B cell (primary cell): ENCODE measurements at regions of chr2 and their contacts with region 1.

Region 1: DNA sequence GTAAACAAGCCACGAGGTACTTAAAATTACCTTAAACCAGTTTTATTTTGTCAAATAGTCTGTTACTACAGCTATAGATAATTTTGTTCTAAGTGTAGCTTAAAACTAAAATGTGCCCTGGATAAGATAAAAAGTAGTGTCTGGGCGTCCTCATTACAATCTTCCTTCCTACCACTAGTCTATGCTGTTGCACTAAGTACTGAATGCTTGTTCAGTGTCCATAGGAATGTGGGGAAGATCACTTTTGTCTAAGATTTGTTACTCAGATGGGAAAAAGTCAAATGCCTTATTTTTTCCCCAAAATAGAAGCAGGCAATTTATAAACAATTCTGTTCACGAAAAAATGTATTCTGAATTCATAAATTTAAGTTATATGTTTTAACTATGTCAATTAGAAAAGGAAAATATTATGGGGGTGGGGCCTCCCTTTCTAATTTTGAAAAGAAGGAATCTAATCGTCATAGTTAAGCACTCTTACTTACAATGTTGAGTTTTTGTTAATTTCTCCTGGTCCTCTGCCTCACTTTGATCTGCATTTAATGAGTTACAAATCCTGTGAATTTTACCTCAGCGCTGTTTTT is 140.4 kb upstream of the VRK2 start:
- DNase-seq: peak; percentile 64
- ATAC-seq: peak; percentile 65
- H3K4me3 ChIP-seq: no peak overlapping the region
- H3K4me3 Mint-ChIP-seq: no peak overlapping the region
- H3K27ac ChIP-seq: no peak overlapping the region
- H3K27ac Mint-ChIP-seq: peak overlapping the region; percentile 1
- H3K4me1 ChIP-seq: peaks cover 14 to 32% of the 10 kb centered on the region in 2 donors
- H3K4me1 Mint-ChIP-seq: peaks cover 34% of the 10 kb centered on the region
- H3K27me3 ChIP-seq: no peaks in the 10 kb centered on the region
- H3K27me3 Mint-ChIP-seq: no peaks in the 10 kb centered on the region
- CTCF ChIP-seq: peak; percentile 84

Region 2: DNA sequence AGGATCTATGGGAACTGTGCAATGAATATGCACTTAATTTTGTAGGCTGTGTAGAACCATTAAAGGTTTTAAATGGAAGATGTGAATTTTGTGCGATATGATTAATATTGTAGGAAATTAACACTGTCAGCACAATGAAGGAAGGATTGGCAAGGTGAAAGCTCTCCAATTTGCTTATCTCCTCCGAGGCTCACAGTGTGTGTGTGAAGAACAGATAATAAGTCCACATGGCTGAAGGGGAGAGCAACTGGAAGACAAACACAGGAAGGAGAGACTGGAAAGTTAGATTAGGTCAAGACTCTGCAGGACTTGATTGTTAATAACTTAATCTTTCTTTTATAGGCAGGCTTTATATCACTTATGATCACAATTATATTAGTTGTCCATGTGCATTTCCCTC is 129.3 kb before region 1 on chr2:
- CTCF ChIA-PET with region 1: no interaction called
- POLR2A ChIA-PET with region 1: no interaction called
- intact Hi-C with region 1: no loop called
- DNase-seq: no peak
- ATAC-seq: no peak
- H3K4me3 ChIP-seq: no peak overlapping the region
- H3K4me3 Mint-ChIP-seq: no peak overlapping the region
- H3K27ac ChIP-seq: no peak overlapping the region
- H3K27ac Mint-ChIP-seq: no peak overlapping the region
- H3K4me1 ChIP-seq: no peaks in the 10 kb centered on the region
- H3K4me1 Mint-ChIP-seq: no peaks in the 10 kb centered on the region
- H3K27me3 ChIP-seq: no peaks in the 10 kb centered on the region
- H3K27me3 Mint-ChIP-seq: no peaks in the 10 kb centered on the region
- CTCF ChIP-seq: no peak

Region 3: GRCh38 chr2:58046585-58047372 is 140.5 kb after region 1 on chr2 and contains the start of gene VRK2:
- CTCF ChIA-PET with region 1: interaction called, 4 read pairs
- POLR2A ChIA-PET with region 1: interaction called, 3 read pairs
- intact Hi-C with region 1: loop called (anchors 2 kb)
- DNase-seq: peak; percentile 94
- ATAC-seq: peak; percentile 91
- H3K4me3 ChIP-seq: peak within 1 kb of the TSS; percentile 71 to 92 (median 77)
- H3K4me3 Mint-ChIP-seq: peak within 1 kb of the TSS; percentile 96
- H3K27ac ChIP-seq: peak within 1 kb of the TSS; percentile 91 to 95
- H3K27ac Mint-ChIP-seq: peak within 1 kb of the TSS; percentile 99
- H3K4me1 ChIP-seq: peaks cover 27 to 29% of the 10 kb centered on the region in 2 donors
- H3K4me1 Mint-ChIP-seq: peaks cover 48% of the 10 kb centered on the region
- H3K27me3 ChIP-seq: no peaks in the 10 kb centered on the region
- H3K27me3 Mint-ChIP-seq: no peaks in the 10 kb centered on the region
- CTCF ChIP-seq: peak; percentile 24
- total RNA-seq, gene VRK2: 33.4 and 35.5 TPM in 2 replicates

Region 4: GRCh38 chr2:58163913-58164312 is 257.7 kb after region 1 on chr2:
- CTCF ChIA-PET with region 1: no interaction called
- POLR2A ChIA-PET with region 1: no interaction called
- intact Hi-C with region 1: loop called (anchors 5 kb)
- DNase-seq: no peak
- ATAC-seq: no peak
- H3K4me3 ChIP-seq: no peak overlapping the region
- H3K4me3 Mint-ChIP-seq: no peak overlapping the region
- H3K27ac ChIP-seq: no peak overlapping the region
- H3K27ac Mint-ChIP-seq: no peak overlapping the region
- H3K4me1 ChIP-seq: no peaks in the 10 kb centered on the region
- H3K4me1 Mint-ChIP-seq: no peaks in the 10 kb centered on the region
- H3K27me3 ChIP-seq: no peaks in the 10 kb centered on the region
- H3K27me3 Mint-ChIP-seq: no peaks in the 10 kb centered on the region
- CTCF ChIP-seq: no peak

Region 5: DNA sequence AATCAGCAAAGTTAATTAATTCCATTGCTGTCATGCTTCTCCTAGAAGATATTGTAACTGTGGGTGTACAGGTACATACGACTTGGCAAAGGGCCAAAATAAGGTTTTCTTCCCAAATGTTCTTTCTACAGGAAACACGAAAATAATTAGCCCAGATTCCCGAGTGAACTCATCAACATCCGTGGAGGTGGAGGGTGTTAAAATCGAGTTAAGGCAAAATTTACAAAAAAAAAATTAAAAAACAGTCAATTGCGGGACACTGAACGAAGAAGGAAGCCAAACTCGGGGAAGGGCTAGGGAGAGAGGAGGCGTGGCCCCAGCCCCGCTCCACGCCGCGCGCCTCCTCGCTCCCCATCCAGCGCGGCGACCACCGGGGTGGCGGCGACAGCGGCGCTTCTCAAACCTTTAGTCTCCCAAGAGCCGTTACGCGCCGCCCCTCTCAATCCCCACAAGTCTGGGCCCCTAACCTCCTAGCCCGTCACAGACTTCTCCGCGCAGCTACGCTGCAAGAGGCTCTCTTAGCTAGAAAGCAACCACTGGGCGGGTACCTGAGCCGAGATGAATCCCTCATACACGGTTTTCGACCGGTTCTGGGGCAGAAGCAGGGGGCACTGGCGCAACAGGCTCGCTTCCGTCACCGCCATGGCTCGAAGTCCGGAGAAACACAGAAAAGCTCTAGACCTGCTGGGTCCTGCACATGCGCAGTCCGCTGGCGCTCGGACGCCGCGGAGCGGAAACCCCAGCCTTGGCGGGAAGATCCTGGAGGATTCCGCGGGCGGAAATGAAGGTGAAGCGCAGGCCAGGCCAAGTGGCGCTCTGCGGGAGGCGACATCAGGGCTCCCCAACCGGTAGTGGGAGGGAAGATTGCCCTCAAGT is 334.7 kb after region 1 on chr2 and contains the start of gene FANCL:
- CTCF ChIA-PET with region 1: interaction called, 7 read pairs
- POLR2A ChIA-PET with region 1: no interaction called
- intact Hi-C with region 1: loop called (anchors 2 kb)
- DNase-seq: peak; percentile 85
- ATAC-seq: peak; percentile 82
- H3K4me3 ChIP-seq: peak within 1 kb of the TSS; percentile 86 to 97 (median 87)
- H3K4me3 Mint-ChIP-seq: peak within 1 kb of the TSS; percentile 96
- H3K27ac ChIP-seq: peak within 1 kb of the TSS; percentile 70 to 74
- H3K27ac Mint-ChIP-seq: peak within 1 kb of the TSS; percentile 90
- H3K4me1 ChIP-seq: peaks cover 12 to 15% of the 10 kb centered on the region in 2 donors
- H3K4me1 Mint-ChIP-seq: peaks cover 38% of the 10 kb centered on the region
- H3K27me3 ChIP-seq: no peaks in the 10 kb centered on the region
- H3K27me3 Mint-ChIP-seq: no peaks in the 10 kb centered on the region
- CTCF ChIP-seq: no peak
- total RNA-seq, gene FANCL: 23.3 and 31.7 TPM in 2 replicates

Region 6: DNA sequence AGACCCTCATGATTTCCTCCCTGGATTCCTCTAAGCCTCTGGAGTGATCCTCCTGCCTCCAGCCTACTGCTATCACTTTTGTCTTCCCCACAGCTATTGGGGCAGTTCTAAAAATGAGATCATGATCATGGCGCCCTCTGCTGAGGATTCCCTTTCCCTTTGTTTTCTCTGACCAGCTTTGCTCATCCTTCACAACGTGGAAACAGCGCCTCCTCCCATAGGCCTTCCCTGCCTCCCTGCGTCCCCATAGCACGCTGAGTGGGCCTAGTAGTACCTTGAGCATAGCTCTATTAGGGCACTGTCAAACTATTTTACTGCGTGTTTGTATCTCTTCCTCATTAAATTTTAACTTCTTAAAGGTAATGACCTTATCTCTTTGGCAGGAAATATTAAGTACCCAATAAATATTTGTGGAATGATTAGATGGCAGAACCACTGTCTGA is 541.8 kb after region 1 on chr2:
- CTCF ChIA-PET with region 1: interaction called, 5 read pairs
- POLR2A ChIA-PET with region 1: no interaction called
- intact Hi-C with region 1: loop called (anchors 1 kb)
- DNase-seq: peak; percentile 38
- ATAC-seq: no peak
- H3K4me3 ChIP-seq: no peak overlapping the region
- H3K4me3 Mint-ChIP-seq: no peak overlapping the region
- H3K27ac ChIP-seq: no peak overlapping the region
- H3K27ac Mint-ChIP-seq: no peak overlapping the region
- H3K4me1 ChIP-seq: no peaks in the 10 kb centered on the region
- H3K4me1 Mint-ChIP-seq: peaks cover 2% of the 10 kb centered on the region
- H3K27me3 ChIP-seq: no peaks in the 10 kb centered on the region
- H3K27me3 Mint-ChIP-seq: no peaks in the 10 kb centered on the region
- CTCF ChIP-seq: no peak

Region 7: DNA sequence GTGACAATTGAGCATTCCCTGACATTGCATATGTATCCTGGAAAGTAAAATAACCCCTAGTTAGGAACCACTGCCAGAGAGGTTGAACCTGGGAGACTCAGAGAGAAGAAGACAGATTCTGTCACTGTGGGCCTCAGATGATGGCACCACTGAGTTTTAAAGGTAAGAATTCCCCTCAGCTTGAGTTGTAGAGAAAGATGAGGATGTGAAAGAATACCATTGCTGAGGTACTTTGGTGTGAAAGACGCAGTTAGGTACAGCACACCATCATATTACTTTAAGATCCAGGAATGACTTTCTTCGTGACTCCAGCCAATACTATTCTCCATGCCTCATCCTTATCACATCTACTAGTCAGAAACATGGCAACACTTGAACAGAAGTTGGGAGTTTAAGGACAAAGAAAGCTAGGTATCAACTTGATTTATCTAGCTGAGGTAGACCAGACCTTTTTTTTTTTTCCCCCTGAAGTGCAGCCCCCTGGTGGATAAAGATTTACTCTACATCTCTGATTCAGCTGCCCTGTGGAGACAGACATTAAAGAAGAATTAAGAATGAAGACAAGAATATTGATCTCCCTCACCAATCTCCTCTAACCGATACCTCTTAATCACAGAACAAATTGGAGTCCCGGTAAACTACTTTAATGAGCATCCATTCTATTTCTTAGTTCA is 965.4 kb after region 1 on chr2:
- CTCF ChIA-PET with region 1: interaction called, 5 read pairs
- POLR2A ChIA-PET with region 1: no interaction called
- intact Hi-C with region 1: loop called (anchors 5 kb)
- DNase-seq: peak; percentile 5
- ATAC-seq: no peak
- H3K4me3 ChIP-seq: no peak overlapping the region
- H3K4me3 Mint-ChIP-seq: no peak overlapping the region
- H3K27ac ChIP-seq: no peak overlapping the region
- H3K27ac Mint-ChIP-seq: no peak overlapping the region
- H3K4me1 ChIP-seq: no peaks in the 10 kb centered on the region
- H3K4me1 Mint-ChIP-seq: peaks cover 2% of the 10 kb centered on the region
- H3K27me3 ChIP-seq: no peaks in the 10 kb centered on the region
- H3K27me3 Mint-ChIP-seq: peaks cover 4% of the 10 kb centered on the region
- CTCF ChIP-seq: peak; percentile 17